HEK293 (cell line): ENCODE measurements at regions of chr1 and their contacts with region 1.

Region 1: GRCh38 chr1:209827384-209828262 is at the start of gene UTP25:
- H3K4me3 ChIP-seq: peak within 1 kb of the TSS; percentile 87
- H3K27ac ChIP-seq: peak within 1 kb of the TSS; percentile 47
- H3K4me1 ChIP-seq: no peaks in the 10 kb centered on the region
- CTCF ChIP-seq: peak; percentile 81

Region 2: DNA sequence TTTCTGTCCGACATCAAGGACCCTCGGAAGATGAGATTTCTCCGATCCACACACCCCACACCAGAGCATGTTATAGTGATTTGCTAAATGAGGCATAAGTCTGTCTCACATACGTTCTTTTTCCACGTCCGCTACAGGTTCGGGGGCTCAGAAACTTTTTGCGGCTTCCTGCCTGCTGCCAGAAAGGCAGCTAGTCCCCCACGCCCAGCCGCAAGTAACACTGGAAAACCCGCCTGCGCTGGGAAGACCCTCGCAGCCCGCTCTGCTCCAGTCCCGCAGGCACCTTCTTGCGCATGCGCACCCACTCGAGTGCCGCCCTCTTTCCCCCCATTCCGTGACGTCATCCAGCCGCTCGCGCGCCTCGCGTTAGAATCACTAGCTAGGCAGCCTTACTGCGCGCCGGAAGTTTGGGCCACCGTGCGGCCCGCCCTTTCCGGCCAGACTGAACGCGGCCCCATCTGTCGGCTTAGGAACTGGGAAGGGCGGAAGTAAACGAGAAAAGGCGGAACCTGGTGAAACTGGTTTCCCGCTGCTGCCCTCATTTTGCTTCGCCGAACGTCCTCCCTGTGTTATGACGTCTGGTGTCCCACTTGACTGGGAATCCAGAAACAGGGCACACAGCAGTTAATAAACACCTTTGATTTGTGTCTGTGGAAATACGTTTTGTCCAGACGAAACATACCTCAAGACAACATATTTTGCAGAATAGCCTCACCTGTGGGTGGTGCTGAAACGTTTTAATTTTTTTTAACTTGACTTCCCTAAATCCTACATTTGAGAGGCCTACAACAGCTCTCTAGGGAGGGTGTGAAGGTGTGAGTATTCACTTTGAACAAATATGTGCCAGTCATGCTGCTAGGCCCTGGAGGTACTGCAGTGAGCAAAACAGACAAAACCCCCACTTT is 43.1 kb before region 1 on chr1 and contains the start of gene C1orf74:
- CTCF ChIA-PET with region 1: interaction called, 16 read pairs
- POLR2A ChIA-PET with region 1: interaction called, 10 read pairs
- H3K4me3 ChIP-seq: peak within 1 kb of the TSS; percentile 74
- H3K27ac ChIP-seq: peak within 1 kb of the TSS; percentile 14; the same call in 1 of the 2 replicates
- H3K4me1 ChIP-seq: no peaks in the 10 kb centered on the region
- CTCF ChIP-seq: 0 out of 2 replicates have a peak, but pooled peaks have one; percentile 17

Region 3: DNA sequence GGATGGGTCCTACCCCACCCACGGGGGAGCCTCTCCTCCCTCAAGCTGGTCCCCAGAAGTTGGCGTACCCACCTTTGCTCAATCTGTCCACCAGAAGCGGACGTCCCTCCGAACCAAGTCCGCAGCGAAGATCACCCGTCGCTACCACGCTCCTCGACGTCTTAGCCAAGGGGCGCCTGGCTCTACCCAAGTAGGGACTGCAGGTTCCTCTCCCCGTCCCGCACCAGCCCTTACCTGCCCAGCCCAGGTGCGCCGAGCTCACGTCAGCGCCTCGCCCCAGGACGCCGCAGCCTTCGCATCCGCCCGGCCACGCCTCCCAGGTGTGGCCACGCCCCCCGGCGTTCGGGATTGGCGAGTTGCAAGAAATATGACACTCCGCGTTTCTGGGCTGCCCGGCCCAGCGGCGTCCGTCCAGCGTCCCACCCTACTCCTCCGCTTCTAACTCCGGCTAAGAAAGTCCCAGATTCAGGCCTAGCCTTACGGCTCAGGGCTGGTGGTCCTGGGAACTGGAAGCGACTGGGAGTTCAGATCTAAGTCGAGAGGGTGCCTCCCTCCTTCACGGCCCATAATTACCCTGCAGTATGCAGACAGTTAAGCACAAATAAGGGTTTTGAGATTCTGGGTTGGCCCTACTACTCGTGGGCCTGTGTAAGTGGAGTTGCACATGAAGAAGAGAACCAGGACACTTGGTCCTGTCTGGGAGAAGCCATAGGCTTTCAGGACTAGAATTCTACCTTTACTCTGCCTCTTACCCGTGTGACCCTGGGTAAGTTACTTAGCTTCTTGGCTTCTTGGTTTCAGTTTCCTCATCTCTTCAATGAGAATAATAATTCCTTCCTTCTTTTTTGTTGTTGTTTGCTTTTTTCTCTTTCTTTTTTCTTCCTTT is 21.5 kb before region 1 on chr1 and contains the start of gene IRF6:
- CTCF ChIA-PET with region 1: interaction called, 111 read pairs
- POLR2A ChIA-PET with region 1: interaction called, 21 read pairs
- H3K4me3 ChIP-seq: peak within 1 kb of the TSS; percentile 85
- H3K27ac ChIP-seq: peak within 1 kb of the TSS; percentile 78
- H3K4me1 ChIP-seq: peaks cover 19% of the 10 kb centered on the region
- CTCF ChIP-seq: no peak

Region 4: GRCh38 chr1:209839875-209840491 is 12.4 kb after region 1 on chr1:
- CTCF ChIA-PET with region 1: interaction called, 26 read pairs
- POLR2A ChIA-PET with region 1: interaction called, 3 read pairs
- H3K4me3 ChIP-seq: no peak overlapping the region
- H3K27ac ChIP-seq: no peak overlapping the region
- H3K4me1 ChIP-seq: no peaks in the 10 kb centered on the region
- CTCF ChIP-seq: no peak

Region 5: DNA sequence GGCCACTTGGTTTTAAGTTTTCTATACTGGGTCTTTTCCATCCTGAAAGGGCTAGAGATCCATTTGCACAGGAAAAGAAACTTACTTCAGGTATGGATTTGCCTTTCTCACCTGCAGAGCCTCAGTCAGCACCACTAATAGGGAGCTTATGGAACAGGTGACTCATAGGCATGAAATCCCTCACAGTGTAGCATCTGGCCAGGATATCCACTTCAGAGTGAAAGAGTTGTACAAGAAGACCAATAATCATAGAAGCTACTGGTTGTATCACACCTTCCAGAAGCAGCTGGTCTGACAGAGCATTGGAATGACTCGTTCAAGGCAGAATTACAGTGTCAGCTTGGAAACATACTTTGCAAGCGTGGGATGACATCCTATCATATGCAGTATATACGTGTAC is 84.1 kb after region 1 on chr1:
- CTCF ChIA-PET with region 1: no interaction called
- POLR2A ChIA-PET with region 1: no interaction called
- H3K4me3 ChIP-seq: no peak overlapping the region
- H3K27ac ChIP-seq: no peak overlapping the region
- H3K4me1 ChIP-seq: no peaks in the 10 kb centered on the region
- CTCF ChIP-seq: no peak

Region 6: GRCh38 chr1:209989525-209989924 is 161.9 kb after region 1 on chr1:
- CTCF ChIA-PET with region 1: interaction called, 15 read pairs
- POLR2A ChIA-PET with region 1: no interaction called
- H3K4me3 ChIP-seq: no peak overlapping the region
- H3K27ac ChIP-seq: no peak overlapping the region
- H3K4me1 ChIP-seq: no peaks in the 10 kb centered on the region
- CTCF ChIP-seq: no peak